ENCODE measurements at regions of chr10 and their contacts with region 1.

Region 1: GRCh38 chr10:31864834-31865518 is 63.7 kb downstream of the ARHGAP12 start:
- DNase-seq: no peak
- ATAC-seq: no peak
- H3K4me3 Mint-ChIP-seq: no peak overlapping the region
- H3K27ac Mint-ChIP-seq: no peak overlapping the region
- H3K4me1 Mint-ChIP-seq: peaks cover 10% of the 10 kb centered on the region
- H3K27me3 Mint-ChIP-seq: no peaks in the 10 kb centered on the region

Region 2: GRCh38 chr10:32005050-32005449 is 140.1 kb after region 1 on chr10:
- CTCF ChIA-PET with region 1: interaction called, 35 read pairs
- DNase-seq: peak; percentile 66
- ATAC-seq: peak; percentile 63
- H3K4me3 Mint-ChIP-seq: no peak overlapping the region
- H3K27ac Mint-ChIP-seq: no peak overlapping the region
- H3K4me1 Mint-ChIP-seq: peaks cover 19% of the 10 kb centered on the region
- H3K27me3 Mint-ChIP-seq: no peaks in the 10 kb centered on the region